ENCODE measurements at regions of chr9 and their contacts with region 1.

Region 1: GRCh38 chr9:111008148-111009075 is 29.9 kb downstream of the LPAR1 start:
- DNase-seq: no peak
- ATAC-seq: no peak
- H3K4me3 ChIP-seq: no peak overlapping the region
- H3K27ac ChIP-seq: no peak overlapping the region
- H3K4me1 ChIP-seq: no peaks in the 10 kb centered on the region
- H3K27me3 ChIP-seq: no peaks in the 10 kb centered on the region
- CTCF ChIP-seq: no peak

Region 2: DNA sequence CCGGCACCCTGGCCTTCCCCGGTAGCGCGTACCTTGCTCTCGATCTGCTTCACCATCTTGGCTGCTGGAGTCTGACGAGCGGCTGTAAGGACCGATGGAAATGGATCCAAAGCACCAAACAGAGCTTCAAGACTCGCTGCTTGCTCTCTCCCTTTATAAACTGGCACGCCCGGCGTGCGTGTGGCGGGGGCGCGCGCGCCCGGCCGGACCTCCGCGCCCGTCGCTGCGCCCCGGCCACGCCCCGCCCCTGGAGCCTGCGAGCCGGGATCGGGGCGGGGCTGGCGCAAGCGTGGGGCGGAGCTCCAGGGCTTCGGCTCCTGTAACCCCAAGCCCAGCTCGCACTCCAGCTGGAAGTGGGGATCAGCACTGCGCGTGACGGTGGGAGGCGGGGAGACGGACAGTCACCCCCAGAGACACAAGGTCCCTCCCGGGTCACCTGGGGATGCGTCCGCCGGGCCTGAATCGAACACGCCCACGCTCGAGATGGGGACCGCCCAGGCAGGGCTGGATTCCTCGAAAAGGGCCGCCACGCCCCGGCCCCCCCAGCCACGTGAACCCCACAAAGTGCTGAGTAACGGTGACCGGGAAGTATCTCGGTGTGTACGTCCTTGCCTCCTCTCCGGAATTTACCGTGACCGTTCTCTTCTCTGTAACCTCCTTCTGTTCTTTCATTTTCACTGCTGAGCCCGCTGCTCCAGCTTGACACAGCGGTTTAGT is 751.9 kb before region 1 on chr9 and contains the start of gene TXN:
- CTCF ChIA-PET with region 1: no interaction called
- POLR2A ChIA-PET with region 1: interaction called, 13 read pairs
- in situ Hi-C with region 1: no loop called
- intact Hi-C with region 1: no loop called
- DNase-seq: peak; percentile 17
- ATAC-seq: peak; percentile 92
- H3K4me3 ChIP-seq: peak within 1 kb of the TSS; percentile 76 to 81
- H3K27ac ChIP-seq: peak within 1 kb of the TSS; percentile 75
- H3K4me1 ChIP-seq: peaks cover 15% of the 10 kb centered on the region
- H3K27me3 ChIP-seq: no peaks in the 10 kb centered on the region
- CTCF ChIP-seq: no peak
- total RNA-seq, gene TXN: 197 TPM